BJ (cell line): ENCODE measurements at regions of chr12 and their contacts with region 1.

Region 1: GRCh38 chr12:126627596-126627995 is 1562.4 kb downstream of the AACS start:
- DNase-seq: no peak
- H3K4me3 ChIP-seq: no peak overlapping the region
- H3K27me3 ChIP-seq: no peaks in the 10 kb centered on the region
- CTCF ChIP-seq: no peak

Region 2: GRCh38 chr12:126295652-126296051 is 331.9 kb before region 1 on chr12:
- CTCF ChIA-PET with region 1: no interaction called
- POLR2A ChIA-PET with region 1: interaction called, 10 read pairs
- DNase-seq: no peak
- H3K4me3 ChIP-seq: no peak overlapping the region
- H3K27me3 ChIP-seq: no peaks in the 10 kb centered on the region
- CTCF ChIP-seq: no peak

Region 3: GRCh38 chr12:126483145-126484068 is 144.2 kb before region 1 on chr12:
- CTCF ChIA-PET with region 1: no interaction called
- POLR2A ChIA-PET with region 1: no interaction called
- DNase-seq: peak; percentile 13
- H3K4me3 ChIP-seq: no peak overlapping the region
- H3K27me3 ChIP-seq: no peaks in the 10 kb centered on the region
- CTCF ChIP-seq: no peak

Region 4: DNA sequence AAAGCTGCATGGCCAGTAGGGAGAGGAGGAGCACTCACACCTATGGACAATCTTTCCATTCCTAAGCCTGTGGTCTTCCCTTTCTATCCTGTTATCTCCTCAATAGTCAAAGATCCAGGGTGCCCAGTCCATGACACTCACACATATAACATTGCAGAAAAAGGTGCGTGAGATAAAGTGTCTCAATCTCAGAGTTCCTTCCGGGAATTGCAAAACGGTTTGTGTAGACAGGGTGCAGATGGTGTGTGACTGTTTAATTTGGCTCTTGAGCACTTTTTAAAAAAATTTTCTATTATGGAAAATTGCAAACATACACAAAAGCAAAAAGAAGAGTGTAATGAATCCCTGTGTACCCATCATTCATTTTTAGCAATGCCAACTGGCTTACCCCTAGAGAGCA is 68.8 kb before region 1 on chr12:
- CTCF ChIA-PET with region 1: no interaction called
- POLR2A ChIA-PET with region 1: no interaction called
- DNase-seq: no peak
- H3K4me3 ChIP-seq: no peak overlapping the region
- H3K27me3 ChIP-seq: no peaks in the 10 kb centered on the region
- CTCF ChIP-seq: no peak